Activated CD4-positive, alpha-beta T cell treated with anti-CD3 and anti-CD28 coated beads, Interleukin-2, amount 10 ng/mL, durations not matched to agents 24 days and 14 days (primary cell): ENCODE measurements at regions of chr2 and their contacts with region 1.

Region 1: DNA sequence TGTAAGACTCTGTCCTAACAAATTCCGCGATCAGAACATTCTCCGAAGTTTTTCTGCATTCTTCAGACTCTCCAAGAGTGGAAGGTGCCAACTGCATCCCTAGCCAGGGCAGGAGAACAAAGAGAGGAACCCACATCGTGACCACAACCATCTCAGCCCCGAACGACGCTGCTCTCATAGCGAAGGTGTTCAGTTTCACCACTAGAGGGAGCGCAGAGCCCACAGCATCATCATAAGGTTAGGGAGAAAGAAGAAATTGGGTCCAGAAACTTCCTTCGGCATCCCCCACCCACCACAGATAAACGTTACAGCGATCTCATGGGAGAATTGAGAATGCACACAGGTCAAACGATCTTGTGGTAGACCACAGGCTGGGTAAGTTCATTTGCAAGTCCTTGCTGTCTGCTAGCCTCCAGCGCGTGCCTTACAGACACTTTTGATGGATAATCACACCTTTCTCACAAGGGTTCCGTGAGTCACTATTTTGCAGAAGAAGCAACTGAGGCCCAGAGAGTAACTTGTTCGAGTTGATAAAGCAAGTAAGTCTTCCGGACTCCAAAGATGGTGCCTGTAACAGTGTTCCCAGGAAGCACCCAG is 53.7 kb upstream of the ARL4C start:
- DNase-seq: peak; percentile 85
- H3K4me3 Mint-ChIP-seq: no peak overlapping the region
- H3K27ac Mint-ChIP-seq: no peak overlapping the region
- H3K4me1 Mint-ChIP-seq: peaks cover 2% of the 10 kb centered on the region
- H3K27me3 Mint-ChIP-seq: peaks cover 27% of the 10 kb centered on the region

Region 2: GRCh38 chr2:234377761-234378391 is 172.7 kb before region 1 on chr2:
- intact Hi-C with region 1: no loop called
- DNase-seq: no peak
- H3K4me3 Mint-ChIP-seq: no peak overlapping the region
- H3K27ac Mint-ChIP-seq: no peak overlapping the region
- H3K4me1 Mint-ChIP-seq: peaks cover 24% of the 10 kb centered on the region
- H3K27me3 Mint-ChIP-seq: no peaks in the 10 kb centered on the region

Region 3: DNA sequence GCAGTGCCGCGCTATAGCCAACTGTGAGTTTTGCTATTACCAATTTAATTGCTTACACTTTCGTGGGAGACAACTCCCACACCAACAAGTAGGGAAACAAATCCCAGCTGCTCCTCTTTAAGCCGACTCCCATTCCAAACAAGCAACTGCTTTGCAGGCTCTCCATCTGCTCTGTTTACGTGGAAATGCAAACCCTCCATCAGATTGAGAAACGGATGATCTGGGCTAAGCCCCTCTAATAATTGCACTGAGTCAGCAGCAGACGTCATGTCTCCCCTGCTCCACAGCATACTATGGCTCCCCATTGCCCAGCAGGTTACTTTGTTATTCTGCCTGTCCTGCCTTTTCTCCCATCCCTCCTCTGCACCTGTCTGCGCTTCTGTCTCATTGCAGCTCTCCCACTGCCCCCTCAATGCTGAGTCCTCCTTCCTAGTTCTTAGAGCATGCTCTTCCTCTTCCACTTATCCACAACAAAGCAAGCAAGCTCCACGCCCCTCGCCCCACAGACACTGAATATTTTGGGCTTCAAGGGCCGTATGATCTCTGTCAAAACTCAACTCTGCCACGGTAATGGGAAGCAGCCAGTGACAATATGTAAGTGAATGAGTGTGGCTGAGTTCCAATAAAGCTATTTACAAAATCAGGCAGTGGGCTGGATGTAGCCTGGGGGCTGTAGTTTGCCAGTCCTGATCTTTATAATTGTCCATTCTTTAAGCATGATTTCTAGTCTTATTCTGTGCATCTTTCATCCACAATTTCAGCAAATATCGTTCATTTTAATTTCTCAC is 14.2 kb before region 1 on chr2:
- intact Hi-C with region 1: no loop called
- DNase-seq: no peak
- H3K4me3 Mint-ChIP-seq: no peak overlapping the region
- H3K27ac Mint-ChIP-seq: no peak overlapping the region
- H3K4me1 Mint-ChIP-seq: no peaks in the 10 kb centered on the region
- H3K27me3 Mint-ChIP-seq: peaks cover 7% of the 10 kb centered on the region

Region 4: DNA sequence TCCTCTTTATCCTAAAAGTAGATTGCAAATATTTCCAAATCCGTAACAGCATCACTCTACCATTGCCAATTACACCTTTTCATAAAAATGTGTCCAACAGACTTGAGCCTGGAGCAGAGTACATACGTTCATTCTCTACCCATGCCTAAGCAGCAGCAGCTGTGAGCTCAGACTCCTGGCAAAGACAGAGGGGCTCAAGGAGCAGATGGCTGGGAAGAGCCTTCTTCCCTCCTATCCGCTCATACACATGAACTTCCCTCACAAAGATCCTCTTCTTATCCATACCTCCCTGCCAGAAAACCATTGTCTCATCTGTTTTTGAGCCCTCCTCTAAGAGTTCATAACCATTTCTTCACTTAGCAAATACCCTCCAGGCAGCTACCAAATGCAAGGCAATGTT is 110.6 kb after region 1 on chr2:
- intact Hi-C with region 1: no loop called
- DNase-seq: no peak
- H3K4me3 Mint-ChIP-seq: no peak overlapping the region
- H3K27ac Mint-ChIP-seq: no peak overlapping the region
- H3K4me1 Mint-ChIP-seq: no peaks in the 10 kb centered on the region
- H3K27me3 Mint-ChIP-seq: no peaks in the 10 kb centered on the region

Region 5: DNA sequence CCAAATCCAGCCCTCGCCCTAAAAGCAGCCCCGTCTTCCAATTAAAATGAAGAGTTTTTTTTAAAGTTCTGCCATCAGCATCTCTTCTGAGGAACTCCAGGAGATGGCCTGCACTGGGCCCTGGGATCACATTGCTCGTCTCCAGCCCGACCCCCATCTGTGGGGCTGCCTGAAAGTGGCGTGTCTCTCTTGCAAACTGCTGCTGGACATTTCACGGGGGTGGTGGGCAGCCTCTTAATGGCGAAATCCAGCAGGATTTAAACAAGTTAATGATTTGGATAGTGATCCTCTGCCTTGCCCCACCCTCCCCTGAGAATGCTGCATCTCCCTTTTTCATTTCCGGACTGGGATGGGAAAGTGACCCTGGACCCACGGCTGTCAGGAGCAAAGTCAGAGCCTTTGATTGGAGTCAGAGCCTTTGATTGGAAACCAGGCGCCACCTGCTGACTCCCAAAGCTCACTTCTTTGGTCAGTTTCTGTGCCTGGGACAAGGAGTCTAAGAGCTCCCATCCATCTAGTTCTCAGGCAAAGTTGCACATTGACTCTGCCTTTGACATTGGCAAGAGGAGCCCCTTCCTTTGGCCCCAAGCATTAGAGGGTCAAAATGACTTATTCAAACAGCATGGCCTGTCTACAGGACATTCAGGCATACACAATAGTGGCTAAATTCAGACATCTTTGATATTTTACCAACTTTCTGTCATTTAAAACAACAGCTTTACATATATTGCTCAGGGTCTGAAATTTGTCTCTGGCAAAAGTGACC is 556.4 kb after region 1 on chr2:
- intact Hi-C with region 1: loop called (anchors 2 kb)
- DNase-seq: peak; percentile 64
- H3K4me3 Mint-ChIP-seq: no peak overlapping the region
- H3K27ac Mint-ChIP-seq: no peak overlapping the region
- H3K4me1 Mint-ChIP-seq: no peaks in the 10 kb centered on the region
- H3K27me3 Mint-ChIP-seq: no peaks in the 10 kb centered on the region

Region 6: DNA sequence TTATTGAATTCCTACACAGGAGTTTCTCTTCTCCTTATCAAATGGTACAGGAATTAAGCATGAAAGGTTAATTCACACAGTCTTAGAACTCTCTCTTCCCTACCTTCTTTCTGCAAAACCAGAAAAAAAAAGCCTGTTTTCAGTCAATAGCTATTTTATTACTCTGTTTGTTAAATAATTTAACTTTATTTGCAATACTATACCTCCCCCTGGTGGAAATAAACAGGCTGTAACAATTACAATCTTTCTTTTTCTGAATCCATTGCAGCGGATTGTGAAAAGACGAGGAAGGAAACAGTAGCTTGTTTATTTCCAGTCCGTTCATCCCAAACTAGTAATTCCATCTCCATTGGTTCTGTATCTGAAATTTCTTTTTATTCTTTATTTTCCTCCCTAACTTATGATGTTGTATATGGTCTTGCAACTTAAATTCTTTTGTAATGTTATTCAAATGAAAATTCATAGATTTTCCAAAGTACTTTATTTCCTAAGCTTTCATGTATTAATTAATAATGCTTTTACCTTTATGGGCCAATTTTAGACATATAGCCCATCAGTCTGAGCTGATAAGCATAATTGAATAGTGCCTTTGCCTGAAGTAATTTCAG is 566.4 kb after region 1 on chr2:
- intact Hi-C with region 1: loop called (anchors 2 kb)
- DNase-seq: peak; percentile 28
- H3K4me3 Mint-ChIP-seq: no peak overlapping the region
- H3K27ac Mint-ChIP-seq: no peak overlapping the region
- H3K4me1 Mint-ChIP-seq: no peaks in the 10 kb centered on the region
- H3K27me3 Mint-ChIP-seq: peaks cover 13% of the 10 kb centered on the region

Region 7: GRCh38 chr2:235594041-235594440 is 1043.4 kb after region 1 on chr2:
- intact Hi-C with region 1: loop called (anchors 5 kb)
- DNase-seq: no peak
- H3K4me3 Mint-ChIP-seq: no peak overlapping the region
- H3K27ac Mint-ChIP-seq: no peak overlapping the region
- H3K4me1 Mint-ChIP-seq: no peaks in the 10 kb centered on the region
- H3K27me3 Mint-ChIP-seq: no peaks in the 10 kb centered on the region

Region 8: GRCh38 chr2:235746257-235747084 is 1195.9 kb after region 1 on chr2:
- intact Hi-C with region 1: loop called (anchors 10 kb)
- DNase-seq: peak; percentile 84
- H3K4me3 Mint-ChIP-seq: no peak overlapping the region
- H3K27ac Mint-ChIP-seq: no peak overlapping the region
- H3K4me1 Mint-ChIP-seq: no peaks in the 10 kb centered on the region
- H3K27me3 Mint-ChIP-seq: peaks cover 6% of the 10 kb centered on the region